ENCODE measurements at regions of chr21 and their contacts with region 1.

Region 1: DNA sequence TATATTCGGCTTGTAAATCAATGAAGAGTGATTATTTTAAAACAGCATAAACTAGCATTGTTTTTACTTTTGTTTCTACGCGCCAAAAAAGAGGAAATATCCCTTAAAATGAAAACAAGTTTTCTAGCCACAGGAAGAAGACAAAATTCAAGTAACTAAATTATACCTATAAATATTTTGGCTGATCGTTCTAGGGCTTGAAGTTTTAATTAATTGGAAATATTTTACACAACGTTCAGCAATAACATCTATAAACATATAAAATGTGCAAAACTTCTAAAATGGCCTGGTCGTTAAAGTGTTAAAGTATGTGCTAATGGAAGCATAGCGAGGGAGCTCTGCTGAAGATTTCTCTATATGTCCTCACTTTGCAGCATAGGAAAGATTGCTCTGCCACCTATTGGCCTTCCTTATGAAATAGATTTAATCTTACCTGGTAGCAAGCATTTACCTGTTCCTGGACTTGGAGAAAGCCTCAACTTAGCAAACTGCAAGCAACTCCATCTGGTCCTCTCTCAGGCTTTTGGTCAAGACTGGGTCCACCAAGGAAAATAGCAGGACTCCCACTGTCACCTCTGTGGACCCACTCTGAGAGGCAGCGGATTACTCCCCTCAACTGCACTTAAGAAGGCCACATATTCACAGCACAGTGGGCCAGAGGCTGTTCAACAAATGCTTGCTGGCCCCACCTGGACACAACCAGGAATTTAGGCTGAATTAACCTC is 351.3 kb upstream of the RUNX1 start:
- DNase-seq: peak in 5 of 7 donors; percentile 16 to 29 (median 23)
- H3K4me3 ChIP-seq: no peak overlapping the region
- H3K27ac ChIP-seq: no peak overlapping the region
- H3K4me1 ChIP-seq: no peaks in the 10 kb centered on the region
- H3K27me3 ChIP-seq: peaks cover 4% of the 10 kb centered on the region
- CTCF ChIP-seq: peak; percentile 16 to 63 (median 58)
- POLR2A ChIP-seq: no peak

Region 2: GRCh38 chr21:35051287-35051818 is 349.0 kb before region 1 on chr21:
- intact Hi-C with region 1: loop called in 1 of 2 experiments (anchors 10 kb)
- DNase-seq: peak; percentile 61 to 89 (median 83)
- H3K4me3 ChIP-seq: no peak overlapping the region
- H3K27ac ChIP-seq: peak overlapping the region in 2 of 5 donors; percentile 35 to 53
- H3K4me1 ChIP-seq: peaks cover 0 to 5% of the 10 kb centered on the region in 2 donors
- H3K27me3 ChIP-seq: no peaks in the 10 kb centered on the region
- CTCF ChIP-seq: peak in 5 of 6 experiments; percentile 27 to 55 (median 53)
- POLR2A ChIP-seq: no peak

Region 3: DNA sequence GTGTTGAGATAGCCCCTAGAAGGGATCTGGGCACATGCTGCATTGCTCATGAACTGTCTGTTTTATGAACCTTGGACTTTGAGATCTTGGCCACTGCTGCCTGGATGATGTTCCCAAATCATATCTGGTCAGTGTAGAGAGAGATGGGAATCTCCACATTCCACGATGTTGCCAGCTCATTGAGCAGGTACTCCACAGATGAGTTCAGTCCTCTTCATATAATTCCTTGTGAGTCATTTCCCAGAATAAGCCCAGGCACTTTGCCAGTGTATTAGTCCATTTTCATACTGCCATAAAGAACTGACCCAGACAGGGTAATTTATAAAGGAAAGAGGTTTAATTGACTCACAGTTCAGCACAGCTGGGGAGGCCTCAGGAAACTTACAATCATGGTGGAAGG is 97.3 kb before region 1 on chr21:
- intact Hi-C with region 1: no loop called
- DNase-seq: peak in 4 of 7 donors; percentile 41 to 55 (median 45)
- H3K4me3 ChIP-seq: no peak overlapping the region
- H3K27ac ChIP-seq: no peak overlapping the region
- H3K4me1 ChIP-seq: no peaks in the 10 kb centered on the region
- H3K27me3 ChIP-seq: no peaks in the 10 kb centered on the region
- CTCF ChIP-seq: no peak
- POLR2A ChIP-seq: no peak

Measured in adrenal gland (tissue), 19 donors.